ENCODE measurements at regions of chr1 and their contacts with region 1.

Region 1: GRCh38 chr1:115679141-115679611 is 37.4 kb downstream of the VANGL1 start:
- DNase-seq: peak in 1 of 4 experiments; percentile 23
- ATAC-seq: no peak; the same call in 2 of the 3 replicates
- H3K4me3 ChIP-seq: no peak overlapping the region
- H3K27ac ChIP-seq: no peak overlapping the region
- H3K4me1 ChIP-seq: peaks cover 0 to 3% of the 10 kb centered on the region in 2 experiments; a peak in 1 of 5 replicates
- H3K27me3 ChIP-seq: no peaks in the 10 kb centered on the region
- CTCF ChIP-seq: no peak
- EP300 ChIP-seq: no peak
- POLR2A ChIP-seq: no peak
- RAD21 ChIP-seq: no peak

Region 2: GRCh38 chr1:115557715-115558114 is 121.5 kb before region 1 on chr1:
- CTCF ChIA-PET with region 1: no interaction called
- POLR2A ChIA-PET with region 1: no interaction called
- in situ Hi-C with region 1: no loop called
- intact Hi-C with region 1: no loop called
- DNase-seq: no peak
- ATAC-seq: no peak
- H3K4me3 ChIP-seq: no peak overlapping the region
- H3K27ac ChIP-seq: no peak overlapping the region
- H3K4me1 ChIP-seq: no peaks in the 10 kb centered on the region
- H3K27me3 ChIP-seq: no peaks in the 10 kb centered on the region; a peak in 1 of 5 replicates
- CTCF ChIP-seq: no peak
- EP300 ChIP-seq: no peak
- POLR2A ChIP-seq: no peak
- RAD21 ChIP-seq: no peak

Region 3: GRCh38 chr1:115642168-115643072 is 36.8 kb before region 1 on chr1:
- CTCF ChIA-PET with region 1: no interaction called
- POLR2A ChIA-PET with region 1: no interaction called
- in situ Hi-C with region 1: no loop called
- intact Hi-C with region 1: loop called (anchors 5 kb)
- DNase-seq: peak; percentile 68 to 76 (median 74)
- ATAC-seq: peak; percentile 74
- H3K4me3 ChIP-seq: peak overlapping the region; percentile 95
- H3K27ac ChIP-seq: peak overlapping the region; percentile 81
- H3K4me1 ChIP-seq: peaks cover 20 to 38% of the 10 kb centered on the region in 2 experiments
- H3K27me3 ChIP-seq: no peaks in the 10 kb centered on the region
- CTCF ChIP-seq: peak in 2 of 3 experiments; percentile 27 to 30; a peak in 3 of 6 replicates
- EP300 ChIP-seq: no peak
- POLR2A ChIP-seq: no peak
- RAD21 ChIP-seq: peak; percentile 30 to 47; a peak in 2 of 4 replicates

Region 4: GRCh38 chr1:115669002-115669673 is 10.0 kb before region 1 on chr1:
- CTCF ChIA-PET with region 1: no interaction called
- POLR2A ChIA-PET with region 1: interaction called, 15 read pairs
- in situ Hi-C with region 1: no loop called
- intact Hi-C with region 1: no loop called
- DNase-seq: peak; percentile 59 to 86 (median 65)
- ATAC-seq: peak; percentile 85
- H3K4me3 ChIP-seq: no peak overlapping the region
- H3K27ac ChIP-seq: peak overlapping the region; percentile 69
- H3K4me1 ChIP-seq: peaks cover 11 to 42% of the 10 kb centered on the region in 2 experiments
- H3K27me3 ChIP-seq: no peaks in the 10 kb centered on the region
- CTCF ChIP-seq: no peak; a peak in 1 of 6 replicates
- EP300 ChIP-seq: peak; percentile 69
- POLR2A ChIP-seq: no peak
- RAD21 ChIP-seq: 0 out of 4 replicates have a peak, but pooled peaks of 1 of the 2 experiments have one; percentile 3

Region 5: DNA sequence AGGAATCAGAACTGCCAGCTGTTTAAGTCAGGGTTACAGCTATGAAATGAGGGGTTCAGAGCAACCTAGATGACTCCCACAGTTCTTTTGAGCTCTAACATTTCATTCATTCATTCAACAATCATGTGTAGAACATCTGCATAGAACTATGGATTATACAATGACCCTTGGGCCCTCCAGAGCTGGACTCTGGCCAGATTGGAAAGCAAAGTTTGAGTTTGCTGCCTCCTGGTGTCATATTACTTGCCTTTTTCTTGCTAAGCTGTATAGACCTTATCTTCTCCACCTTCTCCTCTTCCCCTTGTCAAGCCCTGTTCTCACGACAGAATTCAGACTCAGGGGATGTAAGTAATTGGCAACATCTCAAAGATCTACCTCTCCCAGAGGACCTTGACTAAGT is 85.4 kb after region 1 on chr1:
- CTCF ChIA-PET with region 1: no interaction called
- POLR2A ChIA-PET with region 1: no interaction called
- in situ Hi-C with region 1: no loop called
- intact Hi-C with region 1: no loop called
- DNase-seq: peak; percentile 24 to 44 (median 29)
- ATAC-seq: peak; percentile 76
- H3K4me3 ChIP-seq: no peak overlapping the region
- H3K27ac ChIP-seq: no peak overlapping the region
- H3K4me1 ChIP-seq: no peaks in the 10 kb centered on the region
- H3K27me3 ChIP-seq: peaks cover 5 to 17% of the 10 kb centered on the region in 2 experiments; a peak in 4 of 5 replicates
- CTCF ChIP-seq: peak; percentile 34 to 57 (median 35); a peak in 4 of 6 replicates
- EP300 ChIP-seq: no peak
- POLR2A ChIP-seq: no peak
- RAD21 ChIP-seq: peak; percentile 68 to 83

Region 6: GRCh38 chr1:116122955-116123757 is 444.0 kb after region 1 on chr1:
- CTCF ChIA-PET with region 1: no interaction called
- POLR2A ChIA-PET with region 1: no interaction called
- in situ Hi-C with region 1: no loop called
- intact Hi-C with region 1: no loop called
- DNase-seq: no peak
- ATAC-seq: no peak
- H3K4me3 ChIP-seq: no peak overlapping the region
- H3K27ac ChIP-seq: no peak overlapping the region
- H3K4me1 ChIP-seq: no peaks in the 10 kb centered on the region
- H3K27me3 ChIP-seq: peaks cover 15 to 31% of the 10 kb centered on the region in 2 experiments
- CTCF ChIP-seq: no peak
- EP300 ChIP-seq: no peak
- POLR2A ChIP-seq: no peak
- RAD21 ChIP-seq: no peak